Lower leg skin (tissue), 4 donors: ENCODE measurements at regions of chr16 and their contacts with region 1.

Region 1: GRCh38 chr16:31440516-31441184 is 1.9 kb downstream of the ZNF843 start:
- DNase-seq: no peak
- H3K4me3 ChIP-seq: no peak overlapping the region
- CTCF ChIP-seq: no peak
- POLR2A ChIP-seq: no peak

Region 2: DNA sequence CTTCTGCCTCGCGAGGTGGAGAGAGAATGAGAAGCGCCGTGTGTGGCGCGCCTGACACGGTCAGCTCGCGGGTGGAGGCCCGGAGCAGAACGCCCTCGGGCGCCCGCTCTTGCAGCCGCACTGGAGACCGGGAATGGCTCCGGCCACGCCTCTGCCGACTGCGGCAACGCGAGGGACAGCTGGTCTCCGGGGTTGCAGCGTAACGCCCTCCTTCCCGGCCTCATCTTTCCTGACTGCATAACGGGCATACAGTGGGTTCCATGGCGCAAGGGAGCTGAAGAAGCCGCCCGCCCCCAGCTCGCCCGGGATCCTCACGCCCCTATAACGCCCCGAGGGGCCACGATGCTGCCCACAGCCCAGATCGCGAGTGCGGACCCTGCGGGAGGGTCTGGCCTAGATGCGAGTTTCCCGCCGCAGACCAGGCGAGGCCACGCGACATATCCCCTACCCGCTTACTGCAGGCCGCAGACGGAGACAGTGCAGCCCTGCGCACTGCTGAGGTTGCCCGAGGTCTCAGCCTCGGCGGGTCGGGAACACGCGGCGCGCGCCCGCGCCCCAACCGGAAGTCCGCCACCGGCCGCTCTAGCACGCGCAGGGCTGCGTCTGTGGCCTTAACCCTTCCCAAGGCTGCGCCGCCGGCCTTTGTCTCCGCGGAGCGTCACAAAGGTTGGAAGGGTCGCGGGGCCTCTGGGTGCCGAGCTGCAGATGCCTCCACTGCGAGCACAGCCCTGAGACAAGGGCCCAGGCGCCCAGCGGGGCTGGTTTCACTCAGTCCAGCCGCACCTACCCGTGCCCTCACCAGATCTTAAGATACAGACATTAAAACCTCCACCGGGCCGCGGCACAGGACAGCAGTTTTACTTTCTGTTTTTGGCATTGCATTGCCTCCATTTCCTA is 565.6 kb before region 1 on chr16:
- intact Hi-C with region 1: no loop called
- DNase-seq: peak; percentile 81 to 97
- H3K4me3 ChIP-seq: peak overlapping the region; percentile 90
- CTCF ChIP-seq: peak in 1 of 3 donors; percentile 61
- POLR2A ChIP-seq: no peak

Region 3: GRCh38 chr16:30996324-30996999 is 444.2 kb before region 1 on chr16:
- intact Hi-C with region 1: no loop called
- DNase-seq: no peak
- H3K4me3 ChIP-seq: peak overlapping the region; percentile 38
- CTCF ChIP-seq: no peak
- POLR2A ChIP-seq: no peak

Region 4: DNA sequence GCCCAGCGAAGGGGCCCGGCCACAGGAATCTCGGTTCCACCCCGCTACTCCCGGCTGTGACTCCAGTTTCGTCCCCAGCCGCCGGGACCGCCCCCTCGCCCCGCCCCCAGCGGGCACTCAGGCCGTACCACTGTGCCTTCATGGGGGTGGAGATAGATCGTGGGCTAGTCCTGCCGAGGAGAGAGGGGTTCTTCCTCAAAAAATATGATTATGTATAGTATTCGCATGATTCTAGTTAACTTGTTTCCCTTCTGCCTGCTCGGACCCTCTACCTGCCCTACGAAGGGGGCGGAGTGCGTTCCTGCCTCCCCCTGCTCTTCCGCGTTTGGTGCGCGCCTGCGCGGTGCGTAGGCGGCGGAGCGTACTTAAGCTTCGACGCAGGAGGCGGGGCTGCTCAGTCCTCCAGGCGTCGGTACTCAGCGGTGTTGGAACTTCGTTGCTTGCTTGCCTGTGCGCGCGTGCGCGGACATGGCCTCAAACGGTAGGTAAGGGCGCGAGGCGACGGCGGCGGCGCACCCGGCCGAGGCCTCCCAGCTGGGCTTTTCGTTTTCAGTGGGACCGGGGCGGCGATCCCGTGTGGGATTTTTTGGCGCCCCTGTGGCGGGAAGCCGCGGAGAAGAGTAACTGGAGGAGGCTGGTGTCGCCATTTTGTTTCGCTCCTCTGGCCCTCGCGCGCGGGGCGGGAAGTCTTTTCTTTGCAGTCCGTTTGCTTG is 260.7 kb before region 1 on chr16 and contains the start of gene FUS:
- intact Hi-C with region 1: loop called (anchors 10 kb)
- DNase-seq: peak; percentile 88 to 98
- H3K4me3 ChIP-seq: peak within 1 kb of the TSS; percentile 82
- CTCF ChIP-seq: no peak
- POLR2A ChIP-seq: peak in 1 of 2 donors; percentile 100
- total RNA-seq, gene FUS: 31.9 to 55.8 (median 34.9) TPM

Region 5: DNA sequence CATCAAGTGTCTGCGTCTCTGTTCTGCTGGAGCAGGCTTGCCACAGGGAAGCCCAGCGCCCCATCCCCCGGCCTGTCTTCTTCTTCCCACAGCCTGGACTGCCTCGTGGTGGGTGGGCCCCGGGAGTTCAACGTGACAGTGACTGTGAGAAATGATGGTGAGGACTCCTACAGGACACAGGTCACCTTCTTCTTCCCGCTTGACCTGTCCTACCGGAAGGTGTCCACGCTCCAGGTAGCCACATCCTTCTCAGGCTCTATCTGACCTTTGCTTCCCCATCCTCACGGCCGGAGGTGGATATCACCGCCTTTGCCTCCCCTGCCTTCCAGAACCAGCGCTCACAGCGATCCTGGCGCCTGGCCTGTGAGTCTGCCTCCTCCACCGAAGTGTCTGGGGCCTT is 115.5 kb before region 1 on chr16:
- intact Hi-C with region 1: no loop called
- DNase-seq: no peak
- H3K4me3 ChIP-seq: no peak overlapping the region
- CTCF ChIP-seq: no peak
- POLR2A ChIP-seq: no peak

Region 6: GRCh38 chr16:31382485-31383161 is 58.0 kb before region 1 on chr16:
- intact Hi-C with region 1: loop called (anchors 10 kb)
- DNase-seq: peak in 1 of 2 donors; percentile 51
- H3K4me3 ChIP-seq: no peak overlapping the region
- CTCF ChIP-seq: no peak
- POLR2A ChIP-seq: no peak